ENCODE measurements at regions of chr5 and their contacts with region 1.

Region 1: DNA sequence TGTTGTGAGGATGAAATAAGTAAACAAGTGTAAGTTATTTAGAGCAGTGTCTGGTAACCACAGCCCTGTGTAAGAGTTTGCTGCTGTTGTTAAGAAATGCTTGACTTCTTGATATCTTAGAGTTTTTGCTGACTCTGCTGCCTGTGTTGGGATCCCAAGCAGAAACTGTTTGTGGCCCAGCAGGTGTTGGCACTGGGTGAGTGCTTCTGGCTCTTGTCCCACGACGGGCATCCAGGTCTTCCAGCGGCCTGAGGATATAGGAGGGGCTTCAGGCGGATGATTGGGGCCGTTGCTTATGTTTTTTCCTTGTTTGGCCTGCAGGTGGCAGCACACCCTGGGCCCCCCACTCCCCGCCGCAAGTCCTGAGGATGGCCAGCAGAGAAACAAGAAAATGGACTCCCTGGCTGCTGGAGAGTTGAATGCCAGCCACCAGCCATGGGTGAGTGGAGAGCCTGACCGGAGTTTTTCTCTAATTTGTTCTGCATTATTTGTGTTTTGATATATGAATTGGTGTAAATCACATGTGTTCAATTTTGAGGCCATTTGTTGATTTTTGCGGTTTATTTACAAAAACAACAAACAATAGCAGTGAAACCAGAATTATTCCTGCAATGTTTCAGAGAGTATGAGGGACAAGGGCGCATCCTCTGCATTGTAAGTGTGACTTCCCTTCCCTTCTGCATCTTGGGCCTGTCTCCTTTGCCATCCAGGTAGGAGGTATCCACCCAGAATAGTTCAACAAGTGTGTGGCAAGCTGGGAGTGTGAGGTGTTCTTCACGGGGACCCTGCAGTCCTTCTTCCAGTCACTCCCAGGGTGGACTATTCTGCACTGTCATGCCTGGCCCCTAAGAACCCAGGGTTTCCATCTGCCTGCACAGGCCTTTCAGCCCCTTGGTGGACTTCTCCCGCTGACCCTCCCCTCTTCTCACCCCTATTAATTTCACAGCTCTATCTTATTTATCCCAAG is 50.3 kb downstream of the SLC22A5 start:
- DNase-seq: peak; percentile 27 to 84 (median 64)
- ATAC-seq: peak; percentile 71
- H3K4me3 ChIP-seq: peak overlapping the region; percentile 6 to 9
- H3K4me3 Mint-ChIP-seq: peak overlapping the region; percentile 80
- H3K27ac ChIP-seq: peak overlapping the region; percentile 38 to 98
- H3K27ac Mint-ChIP-seq: peak overlapping the region; percentile 94
- H3K4me1 ChIP-seq: peaks cover 82% of the 10 kb centered on the region
- H3K4me1 Mint-ChIP-seq: peaks cover 92% of the 10 kb centered on the region
- H3K27me3 ChIP-seq: no peaks in the 10 kb centered on the region
- H3K27me3 Mint-ChIP-seq: no peaks in the 10 kb centered on the region
- CTCF ChIP-seq: peak; percentile 89

Region 2: GRCh38 chr5:132103332-132103951 is 316.3 kb before region 1 on chr5:
- CTCF ChIA-PET with region 1: no interaction called
- POLR2A ChIA-PET with region 1: no interaction called
- intact Hi-C with region 1: no loop called
- DNase-seq: peak; percentile 46 to 90 (median 73)
- ATAC-seq: peak; percentile 79
- H3K4me3 ChIP-seq: no peak overlapping the region
- H3K4me3 Mint-ChIP-seq: peak overlapping the region; percentile 29
- H3K27ac ChIP-seq: peak overlapping the region; percentile 15 to 89
- H3K27ac Mint-ChIP-seq: peak overlapping the region; percentile 83
- H3K4me1 ChIP-seq: peaks cover 54% of the 10 kb centered on the region
- H3K4me1 Mint-ChIP-seq: peaks cover 68% of the 10 kb centered on the region
- H3K27me3 ChIP-seq: no peaks in the 10 kb centered on the region
- H3K27me3 Mint-ChIP-seq: no peaks in the 10 kb centered on the region
- CTCF ChIP-seq: peak; percentile 22

Region 3: DNA sequence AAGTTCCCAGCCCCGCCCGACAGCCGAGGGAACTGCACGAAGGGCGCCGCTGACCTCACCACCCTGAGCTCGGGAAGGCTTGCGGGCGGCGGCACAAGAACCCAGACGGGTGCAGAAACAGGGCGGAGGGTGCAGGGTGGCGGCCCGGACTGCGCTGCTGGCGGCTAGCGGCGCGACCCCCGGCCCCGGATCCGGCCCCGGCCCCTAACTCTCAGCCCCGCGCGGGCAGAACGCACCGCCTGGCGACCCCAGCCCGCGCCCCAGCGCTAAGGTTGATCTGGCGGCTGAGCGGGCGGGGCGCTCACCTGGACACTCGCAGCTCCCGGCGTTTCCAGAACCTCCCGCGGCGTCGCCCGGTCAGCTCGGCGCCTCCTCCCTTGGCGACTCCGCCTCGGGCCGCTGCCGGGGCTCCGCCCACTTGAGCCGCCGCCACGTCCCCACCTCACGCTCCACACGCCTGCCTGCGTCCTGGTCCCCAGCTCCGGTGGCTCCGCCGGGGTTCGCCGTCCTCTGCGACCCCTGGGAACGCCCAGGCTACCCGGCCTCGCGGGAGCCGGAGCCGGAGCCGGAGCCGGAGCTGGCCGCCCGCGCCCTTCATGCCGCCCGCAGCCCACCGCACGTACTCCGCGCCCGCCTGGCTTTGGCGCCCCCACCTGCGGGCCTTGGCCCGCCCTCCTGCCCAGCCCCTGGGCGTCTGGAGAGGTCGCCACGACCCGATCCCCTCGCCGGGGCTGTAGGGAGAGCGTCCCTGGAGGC is 192.1 kb before region 1 on chr5 and contains the start of gene P4HA2:
- CTCF ChIA-PET with region 1: no interaction called
- POLR2A ChIA-PET with region 1: no interaction called
- intact Hi-C with region 1: no loop called
- DNase-seq: peak in 6 of 9 experiments; percentile 13 to 53 (median 26)
- ATAC-seq: peak; percentile 36
- H3K4me3 ChIP-seq: peak within 1 kb of the TSS; percentile 12 to 27
- H3K4me3 Mint-ChIP-seq: peak within 1 kb of the TSS; percentile 66
- H3K27ac ChIP-seq: no peak within 1 kb of the TSS
- H3K27ac Mint-ChIP-seq: no peak within 1 kb of the TSS
- H3K4me1 ChIP-seq: peaks cover 8% of the 10 kb centered on the region
- H3K4me1 Mint-ChIP-seq: peaks cover 17% of the 10 kb centered on the region
- H3K27me3 ChIP-seq: peaks cover 3 to 5% of the 10 kb centered on the region in 2 experiments
- H3K27me3 Mint-ChIP-seq: peaks cover 25% of the 10 kb centered on the region
- CTCF ChIP-seq: no peak
- total RNA-seq, gene P4HA2: not detected

Region 4: DNA sequence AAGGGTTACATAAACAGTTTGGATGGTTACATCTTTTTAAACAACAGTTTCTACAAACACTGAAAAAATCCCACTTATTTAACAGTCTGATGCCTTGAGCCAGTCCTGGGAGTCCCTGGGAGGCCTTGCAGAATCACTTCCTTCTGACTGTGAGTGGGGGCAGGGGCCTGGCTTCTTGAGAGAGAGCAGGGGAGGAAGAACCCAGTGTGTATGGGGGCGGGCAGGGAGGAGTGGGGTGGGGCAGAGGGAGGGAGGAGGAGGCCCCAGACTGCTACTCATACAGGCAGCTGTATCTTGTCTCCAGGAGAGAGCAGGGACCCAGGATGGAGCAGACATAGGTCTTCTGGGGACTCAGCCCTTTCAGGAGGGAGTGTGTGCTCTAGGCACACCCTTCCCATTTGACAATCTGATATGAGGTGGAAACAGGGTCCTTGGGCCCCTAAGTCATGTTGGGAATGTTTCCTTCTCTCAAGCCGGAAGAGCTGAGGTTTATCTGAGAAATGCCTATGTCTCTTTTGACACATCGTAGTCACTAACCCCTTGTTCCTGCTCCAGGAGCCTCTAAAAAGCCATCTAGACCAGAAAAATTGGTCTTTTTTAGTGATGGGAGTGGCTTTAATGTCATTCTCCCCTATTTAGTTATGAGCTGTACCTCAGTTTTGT is 17.9 kb after region 1 on chr5:
- CTCF ChIA-PET with region 1: interaction called, 5 read pairs
- POLR2A ChIA-PET with region 1: interaction called, 5 read pairs
- intact Hi-C with region 1: loop called in 1 of 2 experiments (anchors 2 kb)
- DNase-seq: peak in 8 of 9 experiments; percentile 43 to 85 (median 67)
- ATAC-seq: peak; percentile 92
- H3K4me3 ChIP-seq: no peak overlapping the region
- H3K4me3 Mint-ChIP-seq: peak overlapping the region; percentile 63
- H3K27ac ChIP-seq: peak overlapping the region; percentile 31 to 77
- H3K27ac Mint-ChIP-seq: peak overlapping the region; percentile 87
- H3K4me1 ChIP-seq: peaks cover 88% of the 10 kb centered on the region
- H3K4me1 Mint-ChIP-seq: peaks cover 90% of the 10 kb centered on the region
- H3K27me3 ChIP-seq: no peaks in the 10 kb centered on the region
- H3K27me3 Mint-ChIP-seq: no peaks in the 10 kb centered on the region
- CTCF ChIP-seq: no peak

Region 5: DNA sequence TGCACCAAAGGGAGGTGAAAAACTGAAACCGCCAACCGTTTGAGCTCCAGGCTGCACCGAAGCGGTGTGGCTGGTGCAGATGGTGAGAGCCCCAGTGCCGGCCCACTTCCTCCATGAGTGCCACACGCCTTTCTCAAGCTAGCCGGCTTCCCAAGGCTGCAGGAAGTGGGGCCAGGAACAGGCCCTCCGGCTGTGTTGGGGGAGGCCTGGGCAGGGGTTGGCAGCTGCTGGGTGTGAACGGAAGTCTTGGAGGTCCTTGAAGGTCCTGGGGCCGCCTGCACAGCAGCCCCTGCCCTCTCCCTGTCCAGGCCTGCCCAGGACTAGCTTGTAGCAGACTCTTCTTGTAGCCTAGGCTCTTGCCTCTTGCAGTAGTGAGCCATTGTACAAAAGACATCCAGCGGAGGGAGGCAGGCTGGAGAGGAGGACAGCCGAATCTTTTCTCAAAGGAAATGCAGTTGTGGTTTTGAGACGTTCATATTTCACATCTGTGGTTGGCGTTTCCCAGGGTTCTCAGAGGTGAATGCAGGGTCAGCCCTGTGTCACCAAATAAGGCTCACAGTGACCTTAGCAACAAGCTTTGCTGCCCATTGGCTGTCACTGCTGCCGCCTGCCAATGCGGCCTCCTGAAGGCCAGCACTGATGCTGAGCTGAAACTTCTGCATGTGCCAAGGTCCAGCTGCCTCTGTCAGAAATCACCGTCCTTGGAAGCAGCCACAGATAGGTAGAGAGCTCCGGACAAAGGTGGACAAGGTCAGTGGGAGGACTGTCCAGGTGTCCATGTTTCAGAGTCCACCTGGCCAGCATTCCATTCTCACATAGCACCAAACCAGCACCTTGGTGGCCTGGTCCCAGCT is 46.9 kb after region 1 on chr5:
- CTCF ChIA-PET with region 1: interaction called, 50 read pairs
- POLR2A ChIA-PET with region 1: interaction called, 132 read pairs
- intact Hi-C with region 1: loop called (anchors 1 to 2 kb)
- DNase-seq: peak; percentile 53 to 92 (median 74)
- ATAC-seq: peak; percentile 63
- H3K4me3 ChIP-seq: peak overlapping the region; percentile 25 to 28
- H3K4me3 Mint-ChIP-seq: peak overlapping the region; percentile 68
- H3K27ac ChIP-seq: peak overlapping the region; percentile 51 to 85
- H3K27ac Mint-ChIP-seq: peak overlapping the region; percentile 95
- H3K4me1 ChIP-seq: peaks cover 88% of the 10 kb centered on the region
- H3K4me1 Mint-ChIP-seq: peaks cover 96% of the 10 kb centered on the region
- H3K27me3 ChIP-seq: no peaks in the 10 kb centered on the region
- H3K27me3 Mint-ChIP-seq: no peaks in the 10 kb centered on the region
- CTCF ChIP-seq: no peak

Region 6: GRCh38 chr5:132473019-132473531 is 53.3 kb after region 1 on chr5:
- CTCF ChIA-PET with region 1: interaction called, 11 read pairs
- POLR2A ChIA-PET with region 1: interaction called, 132 read pairs
- intact Hi-C with region 1: loop called in 1 of 2 experiments (anchors 2 kb)
- DNase-seq: peak; percentile 70 to 97 (median 85)
- ATAC-seq: peak; percentile 73
- H3K4me3 ChIP-seq: no peak overlapping the region
- H3K4me3 Mint-ChIP-seq: peak overlapping the region; percentile 5
- H3K27ac ChIP-seq: peak overlapping the region; percentile 52 to 93
- H3K27ac Mint-ChIP-seq: peak overlapping the region; percentile 87
- H3K4me1 ChIP-seq: peaks cover 82% of the 10 kb centered on the region
- H3K4me1 Mint-ChIP-seq: peaks cover 92% of the 10 kb centered on the region
- H3K27me3 ChIP-seq: no peaks in the 10 kb centered on the region
- H3K27me3 Mint-ChIP-seq: no peaks in the 10 kb centered on the region
- CTCF ChIP-seq: no peak

Region 7: GRCh38 chr5:132479111-132479951 is 59.5 kb after region 1 on chr5:
- CTCF ChIA-PET with region 1: interaction called, 12 read pairs
- POLR2A ChIA-PET with region 1: interaction called, 136 read pairs
- intact Hi-C with region 1: no loop called
- DNase-seq: peak in 3 of 9 experiments; percentile 27 to 55 (median 35)
- ATAC-seq: no peak
- H3K4me3 ChIP-seq: no peak overlapping the region
- H3K4me3 Mint-ChIP-seq: peak overlapping the region; percentile 8
- H3K27ac ChIP-seq: peak overlapping the region in 1 of 2 experiments; percentile 93
- H3K27ac Mint-ChIP-seq: peak overlapping the region; percentile 91
- H3K4me1 ChIP-seq: peaks cover 66% of the 10 kb centered on the region
- H3K4me1 Mint-ChIP-seq: peaks cover 72% of the 10 kb centered on the region
- H3K27me3 ChIP-seq: no peaks in the 10 kb centered on the region
- H3K27me3 Mint-ChIP-seq: no peaks in the 10 kb centered on the region
- CTCF ChIP-seq: no peak

Region 8: GRCh38 chr5:132484391-132484725 is 64.6 kb after region 1 on chr5:
- CTCF ChIA-PET with region 1: interaction called, 73 read pairs
- POLR2A ChIA-PET with region 1: interaction called, 136 read pairs
- intact Hi-C with region 1: no loop called
- DNase-seq: peak in 2 of 9 experiments; percentile 8 to 16
- ATAC-seq: no peak
- H3K4me3 ChIP-seq: no peak overlapping the region
- H3K4me3 Mint-ChIP-seq: peak overlapping the region; percentile 37
- H3K27ac ChIP-seq: peak overlapping the region in 1 of 2 experiments; percentile 53
- H3K27ac Mint-ChIP-seq: peak overlapping the region; percentile 78
- H3K4me1 ChIP-seq: peaks cover 67% of the 10 kb centered on the region
- H3K4me1 Mint-ChIP-seq: peaks cover 74% of the 10 kb centered on the region
- H3K27me3 ChIP-seq: no peaks in the 10 kb centered on the region
- H3K27me3 Mint-ChIP-seq: no peaks in the 10 kb centered on the region
- CTCF ChIP-seq: no peak

Region 9: DNA sequence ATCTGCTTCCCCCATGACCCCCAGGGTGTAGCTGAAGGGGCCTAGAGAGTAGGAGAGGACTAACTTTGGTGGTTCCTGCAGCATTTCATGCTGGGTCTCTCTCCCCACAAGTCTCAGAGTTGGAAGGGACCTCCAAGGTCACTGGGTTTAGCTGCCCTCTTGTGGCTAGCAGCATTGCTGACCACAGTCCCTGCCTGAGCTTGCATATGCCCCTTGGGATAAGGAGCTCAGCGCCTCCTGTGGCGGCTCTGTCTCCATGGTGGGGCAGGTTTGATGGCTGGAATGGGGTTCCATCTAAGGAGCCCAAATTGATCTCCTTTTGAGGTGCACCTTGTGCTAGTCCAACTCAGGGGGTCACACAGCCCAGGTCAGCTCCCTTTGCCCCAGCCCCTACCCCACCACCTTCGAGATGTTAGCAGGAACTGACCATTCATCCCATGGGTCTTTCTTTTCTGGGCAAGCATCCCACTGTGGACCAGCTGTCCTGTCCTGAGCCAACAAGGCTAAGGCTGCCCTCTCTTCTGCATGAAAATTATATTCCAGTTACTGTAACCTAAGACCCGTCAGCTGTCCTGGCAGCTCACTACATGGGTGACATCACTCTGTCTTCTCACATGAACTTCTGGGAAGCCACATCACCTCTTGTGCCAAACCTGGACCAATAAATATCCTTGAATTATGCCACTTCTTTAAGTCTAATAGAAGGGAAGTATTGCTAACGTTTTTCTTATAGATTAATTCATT is 828.3 kb after region 1 on chr5:
- CTCF ChIA-PET with region 1: no interaction called
- POLR2A ChIA-PET with region 1: no interaction called
- intact Hi-C with region 1: no loop called
- DNase-seq: no peak
- ATAC-seq: no peak
- H3K4me3 ChIP-seq: no peak overlapping the region
- H3K4me3 Mint-ChIP-seq: no peak overlapping the region
- H3K27ac ChIP-seq: no peak overlapping the region
- H3K27ac Mint-ChIP-seq: no peak overlapping the region
- H3K4me1 ChIP-seq: peaks cover 8% of the 10 kb centered on the region
- H3K4me1 Mint-ChIP-seq: peaks cover 15% of the 10 kb centered on the region
- H3K27me3 ChIP-seq: no peaks in the 10 kb centered on the region
- H3K27me3 Mint-ChIP-seq: no peaks in the 10 kb centered on the region
- CTCF ChIP-seq: no peak